Activated naive CD4-positive, alpha-beta T cell treated with anti-CD3 and anti-CD28 coated beads for 36 hours (primary cell): ENCODE measurements at regions of chr9 and their contacts with region 1.

Region 1: GRCh38 chr9:21096172-21096900 is 18.6 kb upstream of the IFNB1 start:
- DNase-seq: peak; percentile 67
- H3K4me3 Mint-ChIP-seq: peak overlapping the region; percentile 76
- H3K27ac Mint-ChIP-seq: peak overlapping the region; percentile 94
- H3K4me1 Mint-ChIP-seq: peaks cover 39% of the 10 kb centered on the region
- H3K27me3 Mint-ChIP-seq: no peaks in the 10 kb centered on the region

Region 2: DNA sequence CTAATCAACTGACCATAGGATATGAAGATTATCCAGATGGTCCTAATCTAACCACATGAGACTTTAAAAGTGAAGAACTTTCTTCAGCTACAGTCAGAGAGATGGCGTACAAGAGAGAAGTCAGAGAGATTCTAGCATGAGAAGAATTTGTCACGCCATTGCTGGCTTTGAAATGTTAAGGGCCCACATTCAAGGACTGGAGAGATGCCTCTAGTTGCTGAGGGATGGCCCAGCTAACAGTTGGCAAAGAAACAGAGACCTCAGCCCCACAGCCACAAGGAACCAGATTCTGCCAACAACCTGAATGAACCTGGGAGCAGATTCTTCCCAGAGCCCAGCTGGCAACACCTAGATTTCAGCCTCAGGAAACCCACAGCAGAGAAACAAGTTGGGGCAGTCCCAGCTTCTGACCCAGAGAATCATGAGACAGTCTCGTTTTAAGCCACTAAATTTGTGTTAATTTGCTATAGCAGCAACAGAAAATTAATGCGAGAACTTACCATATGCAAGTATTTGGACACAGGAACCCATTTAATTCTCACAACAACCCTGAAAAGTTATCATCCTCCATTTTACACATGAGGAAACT is 606.0 kb before region 1 on chr9:
- CTCF ChIA-PET with region 1: no interaction called
- intact Hi-C with region 1: no loop called
- DNase-seq: no peak
- H3K4me3 Mint-ChIP-seq: no peak overlapping the region
- H3K27ac Mint-ChIP-seq: no peak overlapping the region
- H3K4me1 Mint-ChIP-seq: peaks cover 58% of the 10 kb centered on the region
- H3K27me3 Mint-ChIP-seq: no peaks in the 10 kb centered on the region

Region 3: GRCh38 chr9:21078717-21079116 is 17.6 kb before region 1 on chr9:
- CTCF ChIA-PET with region 1: interaction called, 5 read pairs
- intact Hi-C with region 1: loop called (anchors 1 kb)
- DNase-seq: no peak
- H3K4me3 Mint-ChIP-seq: no peak overlapping the region
- H3K27ac Mint-ChIP-seq: peak overlapping the region; percentile 37
- H3K4me1 Mint-ChIP-seq: peaks cover 27% of the 10 kb centered on the region
- H3K27me3 Mint-ChIP-seq: no peaks in the 10 kb centered on the region